ENCODE measurements at regions of chr12 and their contacts with region 1.

Region 1: GRCh38 chr12:120686690-120687577 is at the start of gene MLEC:
- DNase-seq: peak; percentile 100
- H3K4me3 Mint-ChIP-seq: peak within 1 kb of the TSS; percentile 89
- H3K27ac Mint-ChIP-seq: peak within 1 kb of the TSS; percentile 90
- H3K4me1 Mint-ChIP-seq: peaks cover 48% of the 10 kb centered on the region
- H3K27me3 Mint-ChIP-seq: no peaks in the 10 kb centered on the region
- total RNA-seq, gene MLEC: 136 and 142 TPM in 2 replicates

Region 2: DNA sequence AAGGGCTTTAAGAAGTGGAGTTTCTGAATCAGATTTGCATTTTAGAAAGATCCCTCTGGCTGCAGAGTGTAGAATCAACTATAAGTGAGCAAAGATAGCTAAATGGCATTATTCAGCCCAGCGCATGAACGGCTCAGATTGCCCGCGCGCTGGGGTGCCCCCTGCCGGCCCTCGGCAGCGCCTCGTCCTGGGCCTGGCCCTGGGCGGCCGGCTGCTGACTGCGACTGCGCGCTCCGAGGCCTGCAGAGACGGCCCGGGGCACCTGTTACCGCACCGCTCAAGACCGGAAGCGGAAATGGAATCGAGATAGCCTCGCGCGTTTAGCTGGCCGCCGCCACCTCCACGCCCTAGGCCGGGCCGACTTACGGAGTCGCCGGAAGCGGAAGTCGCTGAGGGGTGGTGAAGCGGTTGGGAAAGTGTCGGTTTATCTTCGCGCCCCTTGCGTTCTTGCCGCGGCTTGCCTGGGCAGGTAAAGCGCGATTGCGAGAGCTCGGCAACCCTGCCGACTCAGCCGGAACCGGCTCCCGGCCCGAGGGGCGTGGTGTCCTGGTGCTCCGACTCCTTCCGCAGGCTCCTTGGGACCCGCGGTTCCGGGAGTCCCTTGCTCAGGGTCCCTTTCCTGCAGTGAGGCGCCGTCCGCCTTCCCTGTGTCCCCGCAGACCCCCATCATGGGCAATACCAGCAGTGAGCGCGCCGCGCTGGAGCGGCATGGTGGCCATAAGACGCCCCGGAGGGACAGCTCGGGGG is 1019.2 kb before region 1 on chr12 and contains the start of gene PRKAB1:
- intact Hi-C with region 1: loop called (anchors 5 kb)
- DNase-seq: peak; percentile 96
- H3K4me3 Mint-ChIP-seq: peak within 1 kb of the TSS; percentile 90
- H3K27ac Mint-ChIP-seq: peak within 1 kb of the TSS; percentile 84
- H3K4me1 Mint-ChIP-seq: peaks cover 49% of the 10 kb centered on the region
- H3K27me3 Mint-ChIP-seq: no peaks in the 10 kb centered on the region
- total RNA-seq, gene PRKAB1: 26.8 and 28.2 TPM in 2 replicates

Region 3: DNA sequence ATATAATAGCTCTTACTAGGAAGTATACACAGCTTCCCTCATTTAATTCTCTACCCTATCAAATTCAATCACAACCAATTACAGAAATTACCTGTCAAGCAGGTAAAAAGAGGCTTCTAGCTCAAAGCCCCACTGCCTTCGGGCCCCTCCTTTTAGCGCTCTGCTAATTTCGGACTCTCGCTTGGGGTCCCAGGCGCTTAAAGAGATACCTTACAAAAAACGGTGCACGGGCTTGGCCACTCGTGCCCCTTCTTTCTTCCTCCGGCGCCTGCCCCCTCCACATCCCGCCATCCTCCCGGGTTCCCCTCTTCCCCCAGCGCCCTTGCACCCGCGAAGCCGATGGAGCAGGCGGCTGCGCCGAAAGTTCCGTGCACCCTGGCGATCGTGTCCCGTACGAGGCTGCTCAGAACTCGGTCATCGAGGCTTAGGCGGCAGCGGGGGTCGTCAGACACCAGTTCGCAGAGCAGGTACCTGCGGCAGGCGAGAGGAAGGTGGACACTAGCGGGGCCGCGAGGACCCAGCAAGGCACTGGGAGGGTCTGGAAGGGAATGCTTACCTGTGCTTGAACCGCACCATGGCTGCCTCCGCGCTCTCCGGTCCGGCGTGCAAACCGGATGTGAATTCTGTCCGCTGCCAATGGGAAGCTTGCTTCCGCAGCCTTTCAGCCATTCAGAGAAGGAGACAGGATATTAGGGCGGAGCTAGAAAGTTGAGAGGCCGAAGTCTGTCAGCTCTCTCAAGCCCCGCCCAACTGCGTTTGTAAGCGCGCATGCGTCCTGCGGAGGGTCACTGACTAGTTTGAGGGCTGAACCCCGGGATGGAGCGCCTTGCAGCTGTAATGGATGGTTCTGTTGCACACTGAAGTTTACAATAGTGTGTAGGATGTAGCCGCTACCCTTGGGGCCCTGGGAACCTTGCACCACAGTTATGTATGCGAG is 105.9 kb before region 1 on chr12 and contains the start of gene POP5:
- intact Hi-C with region 1: loop called (anchors 2 kb)
- DNase-seq: peak; percentile 94
- H3K4me3 Mint-ChIP-seq: peak within 1 kb of the TSS; percentile 95
- H3K27ac Mint-ChIP-seq: peak within 1 kb of the TSS; percentile 83
- H3K4me1 Mint-ChIP-seq: peaks cover 31% of the 10 kb centered on the region
- H3K27me3 Mint-ChIP-seq: peaks cover 12% of the 10 kb centered on the region
- total RNA-seq, gene POP5: 64.3 and 65.7 TPM in 2 replicates

Region 4: GRCh38 chr12:120710031-120710804 is 23.3 kb after region 1 on chr12 and contains the start of gene UNC119B:
- intact Hi-C with region 1: loop called (anchors 2 kb)
- DNase-seq: peak; percentile 66
- H3K4me3 Mint-ChIP-seq: peak within 1 kb of the TSS; percentile 88
- H3K27ac Mint-ChIP-seq: peak within 1 kb of the TSS; percentile 82
- H3K4me1 Mint-ChIP-seq: peaks cover 29% of the 10 kb centered on the region
- H3K27me3 Mint-ChIP-seq: no peaks in the 10 kb centered on the region
- total RNA-seq, gene UNC119B: 25.1 and 27.0 TPM in 2 replicates

Region 5: DNA sequence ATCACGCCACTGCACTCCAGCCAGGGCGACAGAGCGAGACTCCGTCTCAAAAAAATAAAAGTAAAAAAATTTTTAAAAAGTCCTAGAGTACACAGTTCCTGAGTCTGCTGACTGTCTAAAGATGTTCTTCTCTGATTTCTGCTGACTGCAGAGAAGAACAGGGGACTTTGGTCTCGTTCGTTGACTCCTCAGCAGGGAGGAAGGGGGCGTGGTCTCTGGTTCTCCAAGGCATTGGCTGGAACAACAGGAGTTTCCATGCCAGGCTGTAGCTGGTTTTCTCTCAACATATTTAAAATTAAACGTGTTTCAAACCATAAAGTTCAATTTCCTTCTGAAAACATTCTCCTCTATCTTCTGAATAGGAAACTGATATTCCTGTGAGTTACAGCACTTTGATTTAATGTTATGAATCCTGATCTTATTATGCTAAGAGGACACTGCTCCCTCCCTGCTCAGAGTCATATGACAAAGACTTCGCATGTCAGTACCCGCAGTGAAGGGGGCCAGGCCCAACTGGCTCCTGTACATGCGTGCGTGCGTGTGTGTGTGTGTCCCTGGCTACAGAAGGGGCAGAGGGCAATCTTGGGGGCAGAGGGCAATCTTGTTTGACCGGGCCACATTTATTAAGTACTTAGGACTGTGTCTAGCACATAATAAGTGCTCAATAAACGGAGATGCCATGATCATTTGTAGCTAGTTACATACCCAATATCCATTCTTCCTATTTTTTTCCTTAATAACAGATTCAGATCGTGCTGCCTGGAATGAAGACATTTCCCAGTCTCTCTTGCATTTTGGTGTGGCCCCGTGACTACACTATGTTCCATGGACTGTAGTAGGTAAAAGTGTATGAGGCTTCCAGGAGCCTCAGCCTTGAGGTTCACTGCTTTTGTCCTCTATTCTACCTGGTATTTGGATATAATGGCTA is 274.9 kb after region 1 on chr12:
- intact Hi-C with region 1: loop called (anchors 2 kb)
- DNase-seq: no peak
- H3K4me3 Mint-ChIP-seq: no peak overlapping the region
- H3K27ac Mint-ChIP-seq: peak overlapping the region; percentile 78
- H3K4me1 Mint-ChIP-seq: peaks cover 38% of the 10 kb centered on the region
- H3K27me3 Mint-ChIP-seq: no peaks in the 10 kb centered on the region

Measured in activated T-helper 2 cell treated with anti-CD3 and anti-CD28 coated beads, Interferon-gamma antibody, Interleukin-2, Interleukin-4, amounts not matched to agents 10 μg/mL and 5 μg/mL and 100 μg/mL, durations not matched to agents 14 hours and 24 hours and 36 hours (primary cell).